Activated naive CD4-positive, alpha-beta T cell treated with anti-CD3 and anti-CD28 coated beads for 36 hours (primary cell): ENCODE measurements at regions of chr2 and their contacts with region 1.

Region 1: GRCh38 chr2:88220718-88221117 is 50.6 kb downstream of the THNSL2 start:
- DNase-seq: no peak
- H3K4me3 Mint-ChIP-seq: no peak overlapping the region
- H3K27ac Mint-ChIP-seq: no peak overlapping the region
- H3K4me1 Mint-ChIP-seq: no peaks in the 10 kb centered on the region
- H3K27me3 Mint-ChIP-seq: peaks cover 11% of the 10 kb centered on the region

Region 2: GRCh38 chr2:88127888-88128653 is 92.6 kb before region 1 on chr2 and contains the start of gene FABP1:
- CTCF ChIA-PET with region 1: no interaction called
- intact Hi-C with region 1: loop called (anchors 5 kb)
- DNase-seq: no peak
- H3K4me3 Mint-ChIP-seq: no peak within 1 kb of the TSS
- H3K27ac Mint-ChIP-seq: no peak within 1 kb of the TSS
- H3K4me1 Mint-ChIP-seq: no peaks in the 10 kb centered on the region
- H3K27me3 Mint-ChIP-seq: no peaks in the 10 kb centered on the region
- total RNA-seq, gene FABP1: not detected

Region 3: GRCh38 chr2:88209521-88210131 is 11.1 kb before region 1 on chr2:
- CTCF ChIA-PET with region 1: no interaction called
- intact Hi-C with region 1: no loop called
- DNase-seq: no peak
- H3K4me3 Mint-ChIP-seq: no peak overlapping the region
- H3K27ac Mint-ChIP-seq: no peak overlapping the region
- H3K4me1 Mint-ChIP-seq: no peaks in the 10 kb centered on the region
- H3K27me3 Mint-ChIP-seq: peaks cover 12% of the 10 kb centered on the region